Sciatic nerve (tissue), 2 donors: ENCODE measurements at regions of chr2 and their contacts with region 1.

Region 1: GRCh38 chr2:168346725-168347477 is 99.5 kb upstream of the STK39 start:
- DNase-seq: peak; percentile 74
- ATAC-seq: peak; percentile 92

Region 2: GRCh38 chr2:168758970-168759820 is 412.3 kb after region 1 on chr2:
- intact Hi-C with region 1: loop called (anchors 10 kb)
- DNase-seq: no peak
- ATAC-seq: peak; percentile 81

Region 3: GRCh38 chr2:168912901-168913369 is 566.0 kb after region 1 on chr2:
- intact Hi-C with region 1: loop called (anchors 10 kb)
- DNase-seq: peak; percentile 58
- ATAC-seq: peak; percentile 86